Activated B cell treated with CpG ODN at 0.5 μM for 24 hours (primary cell): ENCODE measurements at regions of chr5 and their contacts with region 1.

Region 1: DNA sequence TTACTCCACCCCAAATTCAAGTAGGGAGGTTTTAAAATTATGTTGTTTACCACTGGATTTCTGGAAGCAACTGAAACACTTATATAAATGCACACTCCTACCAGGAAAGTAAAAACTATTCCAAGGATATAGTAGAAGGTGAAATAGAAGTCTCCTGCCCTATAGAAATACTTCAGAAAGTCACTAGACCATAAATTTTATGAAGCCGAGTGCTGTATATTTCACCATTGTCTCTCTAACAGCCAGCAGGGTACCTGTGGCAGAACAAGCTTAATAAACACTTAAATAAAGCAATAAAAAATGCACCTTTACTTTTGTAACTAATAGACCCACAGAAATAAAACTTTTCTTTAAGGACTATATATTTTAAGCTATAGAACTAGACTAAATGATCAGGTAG is 631.6 kb downstream of the PDE4D start:
- DNase-seq: no peak
- ATAC-seq: no peak
- H3K4me3 Mint-ChIP-seq: no peak overlapping the region
- H3K27ac Mint-ChIP-seq: no peak overlapping the region
- H3K4me1 Mint-ChIP-seq: peaks cover 2% of the 10 kb centered on the region
- H3K27me3 Mint-ChIP-seq: no peaks in the 10 kb centered on the region
- CTCF ChIP-seq: no peak

Region 2: GRCh38 chr5:59275510-59276324 is 13.7 kb after region 1 on chr5:
- CTCF ChIA-PET with region 1: no interaction called
- POLR2A ChIA-PET with region 1: no interaction called
- intact Hi-C with region 1: loop called (anchors 2 kb)
- DNase-seq: no peak
- ATAC-seq: peak; percentile 49
- H3K4me3 Mint-ChIP-seq: peak overlapping the region; percentile 53
- H3K27ac Mint-ChIP-seq: no peak overlapping the region
- H3K4me1 Mint-ChIP-seq: peaks cover 16% of the 10 kb centered on the region
- H3K27me3 Mint-ChIP-seq: no peaks in the 10 kb centered on the region
- CTCF ChIP-seq: no peak